Caki2 (cell line): ENCODE measurements at regions of chr12 and their contacts with region 1.

Region 1: DNA sequence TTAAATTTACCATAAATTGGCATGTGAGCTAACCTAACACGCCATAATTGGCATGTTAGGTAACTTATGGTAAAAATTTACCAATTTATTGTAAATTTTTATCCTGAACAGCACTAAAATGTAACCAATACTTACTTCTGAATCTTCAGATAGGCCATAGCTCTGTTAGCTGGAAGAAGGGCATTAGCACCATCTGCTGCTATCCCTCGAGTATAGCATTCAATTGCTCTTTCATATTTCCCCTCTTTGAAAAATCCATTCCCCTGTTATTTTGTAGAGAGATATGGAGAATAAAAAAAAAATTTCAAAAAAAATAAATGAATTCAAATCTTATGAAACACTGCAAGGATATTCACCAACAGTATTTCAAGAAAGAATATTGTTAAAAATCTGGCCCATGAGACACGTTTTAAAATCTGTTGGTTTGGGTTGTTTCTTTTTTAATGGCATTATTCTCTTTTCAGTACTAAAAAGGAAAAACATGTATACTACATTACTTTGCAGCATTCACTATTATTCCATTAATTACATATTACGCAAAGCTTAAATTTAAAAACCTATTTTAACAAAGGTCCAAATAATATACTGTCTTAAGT is 19.1 kb downstream of the RPAP3 start:
- DNase-seq: peak; percentile 37

Region 2: GRCh38 chr12:47032644-47033043 is 654.1 kb before region 1 on chr12:
- in situ Hi-C with region 1: loop called (anchors 25 kb)
- DNase-seq: peak; percentile 72